HCT116 (cell line): ENCODE measurements at regions of chr11 and their contacts with region 1.

Region 1: GRCh38 chr11:66677599-66678375 is at the start of gene RBM4B:
- DNase-seq: peak; percentile 84
- ATAC-seq: peak; percentile 94
- H3K4me3 ChIP-seq: peak within 1 kb of the TSS; percentile 68 to 70
- H3K27ac ChIP-seq: peak within 1 kb of the TSS; percentile 82
- H3K4me1 ChIP-seq: peaks cover 3 to 24% of the 10 kb centered on the region in 2 experiments; a peak in 3 of 4 replicates
- H3K27me3 ChIP-seq: no peaks in the 10 kb centered on the region
- CTCF ChIP-seq: no peak
- POLR2A ChIP-seq: peak; percentile 66
- RAD21 ChIP-seq: no peak
- total RNA-seq, gene RBM4B: 18.1 TPM

Region 2: GRCh38 chr11:66408488-66409214 is 269.1 kb before region 1 on chr11:
- CTCF ChIA-PET with region 1: interaction called, 15 read pairs
- POLR2A ChIA-PET with region 1: interaction called, 6 read pairs
- RAD21 ChIA-PET with region 1: interaction called in 1 of 2 experiments, 3 read pairs
- intact Hi-C with region 1: loop called (anchors 1 kb)
- DNase-seq: peak; percentile 62
- ATAC-seq: peak; percentile 92
- H3K4me3 ChIP-seq: peak overlapping the region; percentile 26 to 45; a peak in 3 of 4 replicates
- H3K27ac ChIP-seq: no peak overlapping the region
- H3K4me1 ChIP-seq: peaks cover 0 to 3% of the 10 kb centered on the region in 2 experiments; a peak in 1 of 4 replicates
- H3K27me3 ChIP-seq: peaks cover 16% of the 10 kb centered on the region; the same call in 1 of the 2 replicates
- CTCF ChIP-seq: peak; percentile 99 to 100 (median 100)
- POLR2A ChIP-seq: no peak
- RAD21 ChIP-seq: peak; percentile 99

Region 3: GRCh38 chr11:66438504-66439466 is 239.0 kb before region 1 on chr11 and contains the start of gene MRPL11:
- CTCF ChIA-PET with region 1: interaction called, 17 read pairs
- POLR2A ChIA-PET with region 1: interaction called, 4 read pairs
- RAD21 ChIA-PET with region 1: interaction called, 3 to 5 read pairs
- intact Hi-C with region 1: loop called (anchors 10 kb)
- DNase-seq: peak; percentile 91
- ATAC-seq: peak; percentile 93
- H3K4me3 ChIP-seq: peak within 1 kb of the TSS; percentile 68 to 96
- H3K27ac ChIP-seq: peak within 1 kb of the TSS; percentile 85
- H3K4me1 ChIP-seq: peaks cover 4 to 23% of the 10 kb centered on the region in 2 experiments; a peak in 3 of 4 replicates
- H3K27me3 ChIP-seq: no peaks in the 10 kb centered on the region
- CTCF ChIP-seq: peak; percentile 54 to 60 (median 60); a peak in 5 of 6 replicates
- POLR2A ChIP-seq: peak; percentile 30
- RAD21 ChIP-seq: peak; percentile 49
- total RNA-seq, gene MRPL11: 126 TPM

Region 4: DNA sequence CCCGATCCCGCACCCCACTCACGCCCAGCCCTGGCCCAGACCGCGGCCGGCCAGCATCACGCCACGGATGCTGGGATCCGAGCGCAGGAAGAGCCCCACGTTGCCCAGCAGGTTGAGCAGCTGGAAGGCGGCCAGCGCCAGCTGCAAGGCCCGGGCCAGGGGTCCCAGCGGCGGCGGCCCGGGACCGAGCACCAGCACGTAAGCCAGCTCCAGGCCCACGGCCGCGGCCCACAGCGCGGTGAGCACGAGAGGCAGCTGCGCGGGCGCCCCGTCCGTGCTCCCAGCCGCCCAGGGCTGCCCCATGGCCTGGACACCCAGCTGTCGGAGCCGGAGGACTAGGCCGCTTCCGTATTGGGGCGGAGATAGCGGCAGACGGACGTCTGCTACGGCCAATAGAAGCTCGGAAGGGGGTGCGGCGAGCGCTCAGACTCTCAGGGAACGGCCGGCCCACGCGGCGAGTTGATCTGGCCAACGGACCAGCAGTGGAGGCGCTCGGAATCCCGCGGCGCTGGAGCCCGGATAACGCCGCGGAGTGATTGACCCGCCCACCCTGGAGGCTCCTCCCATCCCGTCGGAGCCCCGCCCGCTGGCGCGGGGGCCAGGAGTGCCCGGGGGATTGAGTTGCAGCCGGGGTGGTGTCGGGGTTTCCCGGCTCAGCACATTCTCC is 132.0 kb before region 1 on chr11 and contains the start of gene ZDHHC24:
- CTCF ChIA-PET with region 1: interaction called, 3 read pairs
- POLR2A ChIA-PET with region 1: interaction called, 10 read pairs
- RAD21 ChIA-PET with region 1: interaction called in 1 of 2 experiments, 11 read pairs
- intact Hi-C with region 1: no loop called
- DNase-seq: peak; percentile 90
- ATAC-seq: peak; percentile 98
- H3K4me3 ChIP-seq: peak within 1 kb of the TSS; percentile 75 to 82
- H3K27ac ChIP-seq: peak within 1 kb of the TSS; percentile 67
- H3K4me1 ChIP-seq: peaks cover 0 to 12% of the 10 kb centered on the region in 2 experiments; a peak in 2 of 4 replicates
- H3K27me3 ChIP-seq: no peaks in the 10 kb centered on the region
- CTCF ChIP-seq: no peak
- POLR2A ChIP-seq: peak; percentile 23
- RAD21 ChIP-seq: no peak
- total RNA-seq, gene ZDHHC24: 10.5 TPM

Region 5: GRCh38 chr11:66616379-66617154 is 61.2 kb before region 1 on chr11 and contains the start of gene RBM14:
- CTCF ChIA-PET with region 1: interaction called, 4 read pairs
- POLR2A ChIA-PET with region 1: interaction called, 13 read pairs
- RAD21 ChIA-PET with region 1: no interaction called
- intact Hi-C with region 1: no loop called
- DNase-seq: peak; percentile 98
- ATAC-seq: peak; percentile 96
- H3K4me3 ChIP-seq: peak within 1 kb of the TSS; percentile 85 to 97
- H3K27ac ChIP-seq: peak within 1 kb of the TSS; percentile 93
- H3K4me1 ChIP-seq: peaks cover 8 to 45% of the 10 kb centered on the region in 2 experiments; a peak in 3 of 4 replicates
- H3K27me3 ChIP-seq: no peaks in the 10 kb centered on the region
- CTCF ChIP-seq: no peak
- POLR2A ChIP-seq: peak; percentile 86
- RAD21 ChIP-seq: no peak
- total RNA-seq, gene RBM14: 95.3 TPM

Region 6: DNA sequence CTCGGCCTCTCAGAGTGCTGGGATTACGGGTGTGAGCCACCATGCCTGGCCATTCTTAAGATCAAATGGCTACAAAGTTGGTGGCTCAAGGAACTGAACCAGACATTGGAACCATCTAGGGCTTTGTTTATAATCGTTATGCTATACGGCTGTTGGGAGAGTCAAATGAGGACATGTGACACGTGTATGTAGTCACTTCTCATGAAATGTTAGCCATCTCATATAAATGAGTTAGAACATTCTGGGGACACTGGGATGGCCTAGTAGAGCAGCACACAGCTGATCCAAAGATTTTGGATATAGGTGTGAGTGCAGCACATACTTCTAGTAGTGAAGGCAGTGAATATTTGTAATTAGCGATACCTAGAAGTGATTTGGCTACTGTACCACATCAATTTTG is 45.9 kb before region 1 on chr11:
- CTCF ChIA-PET with region 1: no interaction called
- POLR2A ChIA-PET with region 1: no interaction called
- RAD21 ChIA-PET with region 1: no interaction called
- intact Hi-C with region 1: no loop called
- DNase-seq: no peak
- ATAC-seq: no peak
- H3K4me3 ChIP-seq: no peak overlapping the region
- H3K27ac ChIP-seq: no peak overlapping the region
- H3K4me1 ChIP-seq: peaks cover 0 to 6% of the 10 kb centered on the region in 2 experiments; a peak in 1 of 4 replicates
- H3K27me3 ChIP-seq: no peaks in the 10 kb centered on the region
- CTCF ChIP-seq: no peak
- POLR2A ChIP-seq: no peak
- RAD21 ChIP-seq: no peak